ENCODE measurements at regions of chr19 and their contacts with region 1.

Region 1: DNA sequence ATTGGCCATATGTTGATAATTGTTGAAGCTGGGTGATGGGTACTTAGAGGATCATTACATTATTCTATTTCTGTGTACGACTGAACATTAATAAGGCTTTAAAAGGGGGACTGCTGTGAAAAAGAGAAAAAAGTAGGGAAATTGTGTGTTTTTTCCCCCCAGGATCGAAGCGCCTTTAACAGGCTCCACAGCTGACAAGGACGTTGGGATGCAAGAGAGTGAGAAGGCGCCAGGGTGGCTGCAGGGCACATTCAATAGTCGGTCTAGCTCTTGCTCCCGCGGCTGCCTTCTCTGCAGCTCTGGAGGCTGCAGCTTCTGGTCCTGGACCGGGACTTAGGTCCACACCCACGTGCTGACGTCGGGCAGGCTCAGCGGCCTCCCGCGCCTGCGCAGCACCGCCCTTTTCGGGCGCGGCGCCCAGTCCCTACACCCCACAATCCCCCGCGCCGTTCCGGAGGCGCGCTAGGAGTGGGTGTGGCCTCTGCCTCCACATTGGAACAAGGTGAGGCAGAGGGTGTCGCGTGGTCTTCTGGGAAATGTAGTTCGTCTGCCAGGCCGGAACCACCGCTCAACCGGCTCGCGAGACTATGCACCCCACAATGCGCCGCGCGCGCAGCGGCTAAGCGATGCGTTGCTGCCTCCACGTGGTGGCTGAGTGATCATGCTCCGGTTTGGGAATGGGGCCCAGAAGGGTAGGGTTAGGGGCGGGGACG is 4.9 kb upstream of the LRFN3 start:
- DNase-seq: peak; percentile 99
- ATAC-seq: peak; percentile 94
- H3K4me3 Mint-ChIP-seq: peak overlapping the region; percentile 72
- H3K27ac Mint-ChIP-seq: peak overlapping the region; percentile 87
- H3K4me1 Mint-ChIP-seq: peaks cover 48% of the 10 kb centered on the region
- H3K27me3 Mint-ChIP-seq: peaks cover 4% of the 10 kb centered on the region
- CTCF ChIP-seq: no peak

Region 2: DNA sequence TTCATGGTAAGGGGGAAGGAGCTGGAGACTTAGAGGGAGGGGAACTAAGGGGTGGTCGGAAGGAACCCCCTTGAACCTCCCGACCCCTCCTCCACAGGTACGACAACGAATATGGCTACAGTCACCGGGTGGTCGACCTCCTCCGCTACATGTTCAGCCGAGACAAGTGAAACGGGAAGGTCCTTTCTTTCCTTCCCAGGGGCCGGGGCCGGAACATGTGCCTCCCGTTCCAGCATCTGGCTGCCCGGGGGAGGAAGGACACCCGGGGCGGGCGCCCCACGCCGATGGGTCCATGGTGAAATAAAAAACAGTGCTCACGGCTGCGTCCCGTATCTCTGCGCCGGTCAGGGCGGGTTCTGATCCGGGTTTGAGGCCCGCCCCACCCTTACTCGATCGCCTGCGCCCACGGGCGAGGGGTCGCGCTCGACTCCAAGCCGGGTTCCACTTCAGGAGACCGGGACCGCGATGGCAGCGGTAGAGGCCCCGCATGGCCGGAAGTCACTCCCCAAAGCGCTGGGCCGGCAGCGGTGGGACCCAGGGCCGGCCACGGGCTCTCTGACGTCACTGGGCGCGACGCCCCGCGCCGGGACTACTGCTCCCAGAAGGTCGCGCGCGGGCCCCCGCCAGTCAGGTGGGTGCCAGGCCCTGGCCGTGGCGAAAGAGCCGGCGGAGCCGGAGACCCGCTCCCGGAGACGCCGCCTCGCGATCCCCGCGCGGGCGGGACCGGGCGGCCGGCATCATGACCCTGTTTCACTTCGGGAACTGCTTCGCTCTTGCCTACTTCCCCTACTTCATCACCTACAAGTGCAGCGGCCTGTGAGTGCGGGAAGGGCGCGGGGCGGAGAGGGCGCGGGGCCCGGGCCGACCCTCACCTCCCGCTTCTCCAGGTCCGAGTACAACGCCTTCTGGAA is 386.1 kb before region 1 on chr19 and contains the start of gene TMEM147:
- CTCF ChIA-PET with region 1: no interaction called
- POLR2A ChIA-PET with region 1: no interaction called
- intact Hi-C with region 1: loop called (anchors 1 kb)
- DNase-seq: peak; percentile 84
- ATAC-seq: peak; percentile 89
- H3K4me3 Mint-ChIP-seq: peak within 1 kb of the TSS; percentile 88
- H3K27ac Mint-ChIP-seq: peak within 1 kb of the TSS; percentile 79
- H3K4me1 Mint-ChIP-seq: peaks cover 44% of the 10 kb centered on the region
- H3K27me3 Mint-ChIP-seq: no peaks in the 10 kb centered on the region
- CTCF ChIP-seq: no peak
- total RNA-seq, gene TMEM147: 46.9 and 55.3 TPM in 2 replicates

Region 3: GRCh38 chr19:35748106-35749020 is 183.0 kb before region 1 on chr19 and contains the start of gene LIN37:
- CTCF ChIA-PET with region 1: no interaction called
- POLR2A ChIA-PET with region 1: interaction called, 5 read pairs
- intact Hi-C with region 1: loop called (anchors 1 kb)
- DNase-seq: peak; percentile 91
- ATAC-seq: peak; percentile 73
- H3K4me3 Mint-ChIP-seq: peak within 1 kb of the TSS; percentile 98
- H3K27ac Mint-ChIP-seq: peak within 1 kb of the TSS; percentile 96
- H3K4me1 Mint-ChIP-seq: peaks cover 48% of the 10 kb centered on the region
- H3K27me3 Mint-ChIP-seq: no peaks in the 10 kb centered on the region
- CTCF ChIP-seq: no peak
- total RNA-seq, gene LIN37: 12.2 and 14.3 TPM in 2 replicates

Region 4: DNA sequence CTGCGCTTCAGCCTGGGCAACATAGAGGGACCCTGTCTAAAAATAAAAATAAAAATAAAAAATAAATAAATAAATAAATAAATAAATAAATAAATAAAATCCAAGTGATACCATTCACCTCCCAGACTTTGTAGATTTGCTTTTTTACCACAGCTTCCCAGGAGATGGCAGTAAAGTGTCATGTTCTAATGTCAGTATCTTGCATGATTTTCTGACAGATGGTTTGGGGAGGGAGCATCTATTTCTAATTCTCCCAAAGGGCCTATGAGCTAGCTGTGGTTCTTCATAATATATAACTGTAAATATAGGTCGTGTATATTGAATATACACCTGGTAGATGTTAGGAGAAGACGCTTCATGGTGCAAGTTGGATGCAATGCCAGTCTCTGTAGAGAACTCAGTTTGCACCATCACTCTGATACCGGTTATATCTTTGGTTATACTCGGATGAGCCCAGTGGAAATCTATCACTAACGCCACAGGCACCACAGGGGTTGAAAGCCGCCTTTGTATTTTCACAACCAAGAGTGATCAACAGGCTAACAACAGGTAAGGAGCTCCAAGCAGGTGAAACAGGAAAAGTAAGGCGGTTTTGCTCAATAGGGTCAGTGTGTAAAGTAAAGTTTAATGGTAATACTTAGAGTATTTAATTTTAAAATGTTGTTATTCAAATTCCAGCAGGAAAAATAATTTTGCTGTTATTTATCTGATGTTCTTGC is 49.0 kb before region 1 on chr19:
- CTCF ChIA-PET with region 1: interaction called, 81 read pairs
- POLR2A ChIA-PET with region 1: interaction called, 60 read pairs
- intact Hi-C with region 1: loop called (anchors 1 kb)
- DNase-seq: no peak
- ATAC-seq: peak; percentile 69
- H3K4me3 Mint-ChIP-seq: no peak overlapping the region
- H3K27ac Mint-ChIP-seq: peak overlapping the region; percentile 38
- H3K4me1 Mint-ChIP-seq: peaks cover 6% of the 10 kb centered on the region
- H3K27me3 Mint-ChIP-seq: peaks cover 20% of the 10 kb centered on the region
- CTCF ChIP-seq: no peak

Region 5: DNA sequence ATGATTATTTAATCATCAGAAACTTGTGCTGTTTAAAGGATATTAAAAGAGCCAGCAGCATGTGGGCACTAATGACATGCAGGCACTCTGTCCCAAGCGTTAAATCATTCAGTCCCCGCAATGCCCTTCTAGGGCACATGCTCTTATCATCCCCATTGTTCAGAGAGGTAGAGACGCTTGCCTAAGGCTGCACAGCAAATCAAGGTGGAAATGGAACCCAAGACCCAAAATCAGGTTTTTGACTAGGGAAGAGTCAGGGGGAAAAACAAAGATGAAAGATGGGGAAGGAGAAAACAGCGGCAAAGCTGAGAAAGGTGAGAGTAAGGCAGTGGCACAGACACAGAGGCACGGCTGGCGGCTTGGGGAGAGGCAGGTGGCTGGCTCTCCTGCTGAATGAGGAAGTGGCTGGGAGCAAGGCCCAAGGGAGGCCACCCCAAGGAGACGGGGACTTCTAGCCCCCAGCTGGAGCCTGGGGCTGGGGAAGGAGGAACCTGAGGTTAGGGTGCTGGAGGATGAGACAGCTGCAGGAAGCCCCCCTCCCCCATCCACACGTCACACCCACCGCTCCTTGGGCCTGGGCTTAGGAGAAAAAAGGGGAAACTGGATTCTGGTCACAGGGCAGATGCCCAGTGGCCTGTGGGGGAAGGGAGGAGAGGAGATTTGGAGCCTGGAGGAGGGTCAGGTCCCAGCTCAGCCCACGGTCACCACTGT is 22.2 kb before region 1 on chr19:
- CTCF ChIA-PET with region 1: no interaction called
- POLR2A ChIA-PET with region 1: interaction called, 48 read pairs
- intact Hi-C with region 1: loop called (anchors 1 kb)
- DNase-seq: peak; percentile 70
- ATAC-seq: peak; percentile 83
- H3K4me3 Mint-ChIP-seq: peak overlapping the region; percentile 67
- H3K27ac Mint-ChIP-seq: peak overlapping the region; percentile 81
- H3K4me1 Mint-ChIP-seq: peaks cover 71% of the 10 kb centered on the region
- H3K27me3 Mint-ChIP-seq: no peaks in the 10 kb centered on the region
- CTCF ChIP-seq: no peak

Measured in activated B cell treated with CpG ODN at 0.5 μM for 24 hours (primary cell).